Activated T-helper 1 cell treated with anti-CD3 and anti-CD28 coated beads, Interleukin-12 subunit alpha, Interleukin-12 subunit beta, Interleukin-2, Interleukin-4 antibody, amounts not matched to agents 30 ng/mL and 10 ng/mL and 1 ng/mL, durations not matched to agents 14 hours and 24 hours and 36 hours (primary cell): ENCODE measurements at regions of chr7 and their contacts with region 1.

Region 1: DNA sequence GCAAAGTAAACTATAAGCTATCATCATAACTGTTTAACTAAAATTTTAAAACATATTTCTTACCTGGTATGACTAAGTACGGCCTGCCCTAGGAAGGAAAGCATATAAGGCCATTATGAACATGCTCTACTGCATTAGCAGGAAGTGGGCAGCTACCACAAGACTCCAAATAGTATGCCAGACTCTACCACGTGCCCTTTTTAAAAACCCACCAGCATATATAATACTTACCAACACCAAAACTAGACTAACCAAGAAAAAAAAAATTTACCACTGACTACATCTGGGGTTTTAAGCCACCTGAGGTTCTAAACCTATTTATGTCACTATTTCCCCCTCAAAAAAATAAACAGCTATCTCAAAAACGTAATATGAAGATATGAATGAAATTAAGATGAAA is 30.1 kb downstream of the NUDCD3 start:
- DNase-seq: peak; percentile 57
- H3K4me3 Mint-ChIP-seq: peak overlapping the region; percentile 40
- H3K27ac Mint-ChIP-seq: peak overlapping the region; percentile 76
- H3K4me1 Mint-ChIP-seq: peaks cover 59% of the 10 kb centered on the region
- H3K27me3 Mint-ChIP-seq: no peaks in the 10 kb centered on the region

Region 2: GRCh38 chr7:43925984-43926797 is 534.1 kb before region 1 on chr7 and contains the start of gene UBE2D4:
- intact Hi-C with region 1: loop called (anchors 5 kb)
- DNase-seq: peak; percentile 88
- H3K4me3 Mint-ChIP-seq: peak within 1 kb of the TSS; percentile 95
- H3K27ac Mint-ChIP-seq: peak within 1 kb of the TSS; percentile 97
- H3K4me1 Mint-ChIP-seq: peaks cover 30% of the 10 kb centered on the region
- H3K27me3 Mint-ChIP-seq: peaks cover 2% of the 10 kb centered on the region
- total RNA-seq, gene UBE2D4: 15.3 and 17.7 TPM in 2 replicates

Region 3: DNA sequence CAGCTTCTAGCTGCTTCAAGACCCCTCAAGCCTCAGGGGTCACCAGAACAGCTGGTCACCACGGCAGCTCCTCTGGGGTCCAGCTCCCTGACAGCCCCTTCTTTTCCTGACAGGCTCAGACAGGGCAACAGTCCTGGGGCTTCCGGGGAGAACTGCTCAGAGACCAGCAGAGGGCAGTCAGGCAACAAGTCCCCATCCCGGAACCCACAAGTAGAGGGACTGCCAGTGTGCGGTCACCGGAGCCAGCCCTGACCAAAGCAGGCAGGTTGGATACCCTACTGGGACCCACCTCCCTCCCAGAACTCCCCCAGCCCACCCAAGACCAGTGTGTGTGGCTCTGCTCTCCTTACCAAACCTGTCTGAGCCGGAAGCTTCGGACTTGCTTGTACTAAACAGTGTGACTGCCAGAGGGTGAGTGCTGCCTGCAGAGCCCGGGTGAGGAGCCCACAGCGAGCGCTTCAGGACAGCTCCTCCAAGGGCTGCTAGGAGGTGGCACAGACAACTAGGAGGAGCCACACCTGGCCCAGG is 219.3 kb before region 1 on chr7:
- intact Hi-C with region 1: loop called (anchors 5 kb)
- DNase-seq: peak; percentile 46
- H3K4me3 Mint-ChIP-seq: no peak overlapping the region
- H3K27ac Mint-ChIP-seq: peak overlapping the region; percentile 4
- H3K4me1 Mint-ChIP-seq: no peaks in the 10 kb centered on the region
- H3K27me3 Mint-ChIP-seq: no peaks in the 10 kb centered on the region

Region 4: GRCh38 chr7:44415047-44415446 is 45.3 kb before region 1 on chr7:
- intact Hi-C with region 1: loop called (anchors 5 kb)
- DNase-seq: no peak
- H3K4me3 Mint-ChIP-seq: no peak overlapping the region
- H3K27ac Mint-ChIP-seq: no peak overlapping the region
- H3K4me1 Mint-ChIP-seq: peaks cover 11% of the 10 kb centered on the region
- H3K27me3 Mint-ChIP-seq: no peaks in the 10 kb centered on the region

Region 5: DNA sequence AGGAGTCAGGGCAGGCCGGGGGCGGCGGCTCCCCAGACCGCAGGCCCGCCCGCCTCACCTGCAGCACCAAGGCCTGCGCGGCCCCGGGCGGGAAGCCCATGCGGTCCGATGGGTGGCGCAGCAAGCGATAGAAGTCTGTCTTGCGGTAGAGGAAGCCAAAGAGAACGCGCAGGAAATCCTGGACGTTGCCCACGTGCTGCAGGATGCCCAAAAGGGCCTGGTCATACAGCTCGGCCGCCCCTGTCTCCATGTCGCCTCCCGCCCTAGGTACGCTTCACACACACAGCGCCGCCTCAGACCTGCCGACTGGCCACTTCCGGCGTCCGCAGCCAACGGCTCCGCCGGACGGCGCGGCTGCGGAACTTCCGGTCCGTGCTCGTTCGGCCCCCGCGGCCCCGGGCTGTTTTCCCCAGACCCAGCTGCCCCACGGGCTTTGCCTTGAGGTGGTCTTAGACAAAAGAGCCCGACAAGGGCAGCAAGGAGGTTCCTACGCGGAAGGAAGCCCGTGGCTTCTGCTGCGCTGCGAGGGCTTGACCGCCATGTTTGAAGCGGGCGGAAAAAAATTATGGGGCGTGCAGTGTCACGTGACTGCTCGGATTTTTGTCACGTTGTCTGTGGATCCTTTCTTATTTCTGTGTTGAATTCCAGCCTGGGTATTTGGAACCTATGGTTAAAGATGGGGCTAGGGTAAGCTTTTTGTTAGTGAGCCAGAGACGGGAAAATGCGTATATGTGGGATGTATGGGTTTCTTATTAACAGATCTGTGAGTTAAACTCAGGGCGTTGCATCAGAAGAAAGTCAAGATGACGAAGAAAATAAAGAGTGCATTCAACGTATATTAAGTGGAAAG is 30.3 kb after region 1 on chr7 and contains the start of gene NUDCD3:
- intact Hi-C with region 1: loop called (anchors 1 kb)
- DNase-seq: peak; percentile 73
- H3K4me3 Mint-ChIP-seq: peak within 1 kb of the TSS; percentile 88
- H3K27ac Mint-ChIP-seq: peak within 1 kb of the TSS; percentile 93
- H3K4me1 Mint-ChIP-seq: peaks cover 44% of the 10 kb centered on the region
- H3K27me3 Mint-ChIP-seq: no peaks in the 10 kb centered on the region
- total RNA-seq, gene NUDCD3: 77.9 and 83.1 TPM in 2 replicates